MCF 10A (cell line): ENCODE measurements at regions of chr3 and their contacts with region 1.

Region 1: DNA sequence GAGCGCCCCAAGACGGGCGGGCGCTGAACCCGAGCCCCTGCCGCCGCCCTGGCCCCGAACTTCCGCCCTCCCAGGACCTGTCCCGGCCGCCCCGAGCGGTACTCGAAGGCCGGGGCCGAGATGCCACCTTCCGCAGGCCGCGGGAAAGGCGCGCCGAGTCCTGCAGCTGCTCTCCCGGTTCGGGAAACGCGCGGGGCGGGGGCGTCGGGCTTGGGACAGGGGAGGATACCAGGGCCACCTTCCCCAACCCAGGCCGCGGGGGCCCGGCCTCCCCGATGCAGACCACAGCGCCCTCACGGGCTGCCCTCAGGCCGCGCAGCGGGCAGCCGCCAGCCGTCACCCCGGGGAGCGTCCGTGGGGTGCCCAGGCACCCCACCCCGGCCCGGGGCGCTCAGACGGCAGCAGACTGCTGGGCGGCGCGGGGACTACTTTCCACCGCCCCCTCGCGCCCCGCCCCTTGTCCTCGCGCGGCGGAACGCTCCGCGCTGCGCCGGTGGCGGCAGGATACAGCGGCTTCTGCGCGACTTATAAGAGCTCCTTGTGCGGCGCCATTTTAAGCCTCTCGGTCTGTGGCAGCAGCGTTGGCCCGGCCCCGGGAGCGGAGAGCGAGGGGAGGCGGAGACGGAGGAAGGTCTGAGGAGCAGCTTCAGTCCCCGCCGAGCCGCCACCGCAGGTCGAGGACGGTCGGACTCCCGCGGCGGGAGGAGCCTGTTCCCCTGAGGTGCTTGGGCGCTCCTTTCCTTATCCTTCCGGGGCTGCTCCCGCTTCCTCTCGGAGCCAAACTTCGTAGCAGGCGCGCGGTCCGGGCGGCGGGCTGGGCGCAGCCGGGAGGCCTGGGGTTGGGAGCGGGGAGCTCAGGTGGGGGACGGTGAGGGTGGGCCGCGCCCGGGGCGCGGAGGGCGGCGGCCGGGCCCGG is at the start of gene CTNNB1:
- DNase-seq: peak; percentile 89
- H3K4me3 Mint-ChIP-seq: peak within 1 kb of the TSS; percentile 82
- H3K27ac Mint-ChIP-seq: peak within 1 kb of the TSS; percentile 74
- H3K4me1 Mint-ChIP-seq: peaks cover 22% of the 10 kb centered on the region
- H3K27me3 Mint-ChIP-seq: no peaks in the 10 kb centered on the region
- CTCF ChIP-seq: no peak
- total RNA-seq, gene CTNNB1: 222 and 244 TPM in 2 replicates

Region 2: DNA sequence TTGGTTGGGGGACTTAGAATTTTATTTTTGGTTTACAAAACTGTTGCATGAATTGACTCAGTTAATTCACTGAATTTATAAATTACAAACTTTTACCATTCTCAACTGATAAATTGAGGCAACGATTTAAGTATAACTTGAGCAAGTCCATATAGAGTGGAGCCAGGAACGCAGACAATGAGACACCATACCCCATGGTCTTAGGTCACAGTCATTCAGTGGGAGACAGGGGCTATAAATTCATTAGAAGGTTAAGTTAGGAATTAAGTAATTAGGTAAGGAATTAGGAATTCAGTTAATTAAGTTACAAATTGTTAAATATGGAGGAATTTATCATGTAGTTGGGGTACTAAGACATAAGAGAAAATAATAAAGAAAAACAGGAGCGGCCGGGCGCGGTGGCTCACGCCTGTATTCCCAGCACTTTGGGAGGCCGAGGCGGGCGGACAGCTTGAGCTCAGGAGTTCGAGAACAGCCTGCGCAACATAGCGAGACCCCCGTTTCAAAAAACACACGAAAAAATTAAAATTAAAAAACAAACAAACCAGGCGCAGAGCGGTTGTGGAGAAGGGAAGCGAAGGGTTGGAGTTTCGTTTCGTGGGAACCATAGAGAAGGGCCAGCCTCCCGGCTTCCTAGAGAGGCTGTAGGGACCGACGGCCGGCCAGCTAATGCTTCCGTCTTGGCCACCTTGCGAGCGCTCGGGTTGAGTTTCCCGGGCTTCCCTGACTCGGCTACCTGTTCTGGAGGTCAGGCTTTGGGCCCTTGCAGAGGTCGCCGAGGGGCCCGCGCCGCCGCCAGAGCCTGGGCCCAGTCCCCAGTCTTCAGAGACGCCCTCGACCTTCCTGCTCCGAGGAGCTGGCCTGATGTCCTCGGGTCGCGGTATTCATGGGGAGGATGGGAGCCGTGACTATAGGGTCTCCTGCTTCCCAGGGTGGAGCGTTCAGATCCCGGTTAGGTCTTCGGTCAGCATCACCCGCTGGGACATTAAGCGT is 722.4 kb before region 1 on chr3 and contains the start of gene ZNF619:
- CTCF ChIA-PET with region 1: no interaction called
- POLR2A ChIA-PET with region 1: interaction called, 3 read pairs
- intact Hi-C with region 1: loop called (anchors 10 kb)
- DNase-seq: peak; percentile 80
- H3K4me3 Mint-ChIP-seq: peak within 1 kb of the TSS; percentile 90
- H3K27ac Mint-ChIP-seq: peak within 1 kb of the TSS; percentile 99
- H3K4me1 Mint-ChIP-seq: peaks cover 11% of the 10 kb centered on the region
- H3K27me3 Mint-ChIP-seq: no peaks in the 10 kb centered on the region
- CTCF ChIP-seq: no peak
- total RNA-seq, gene ZNF619: 8.3 and 8.7 TPM in 2 replicates

Region 3: GRCh38 chr3:40719660-40720287 is 479.4 kb before region 1 on chr3:
- CTCF ChIA-PET with region 1: interaction called, 25 read pairs
- POLR2A ChIA-PET with region 1: interaction called, 7 read pairs
- intact Hi-C with region 1: loop called (anchors 2 kb)
- DNase-seq: peak; percentile 83
- H3K4me3 Mint-ChIP-seq: no peak overlapping the region
- H3K27ac Mint-ChIP-seq: no peak overlapping the region
- H3K4me1 Mint-ChIP-seq: peaks cover 17% of the 10 kb centered on the region
- H3K27me3 Mint-ChIP-seq: no peaks in the 10 kb centered on the region
- CTCF ChIP-seq: peak; percentile 51

Region 4: GRCh38 chr3:40877631-40878463 is 321.4 kb before region 1 on chr3:
- CTCF ChIA-PET with region 1: no interaction called
- POLR2A ChIA-PET with region 1: no interaction called
- intact Hi-C with region 1: no loop called
- DNase-seq: peak; percentile 94
- H3K4me3 Mint-ChIP-seq: no peak overlapping the region
- H3K27ac Mint-ChIP-seq: peak overlapping the region; percentile 4
- H3K4me1 Mint-ChIP-seq: peaks cover 34% of the 10 kb centered on the region
- H3K27me3 Mint-ChIP-seq: no peaks in the 10 kb centered on the region
- CTCF ChIP-seq: no peak

Region 5: GRCh38 chr3:40971191-40972168 is 227.7 kb before region 1 on chr3:
- CTCF ChIA-PET with region 1: no interaction called
- POLR2A ChIA-PET with region 1: interaction called, 7 read pairs
- intact Hi-C with region 1: loop called (anchors 1 kb)
- DNase-seq: peak; percentile 98
- H3K4me3 Mint-ChIP-seq: peak overlapping the region; percentile 5
- H3K27ac Mint-ChIP-seq: peak overlapping the region; percentile 98
- H3K4me1 Mint-ChIP-seq: peaks cover 20% of the 10 kb centered on the region
- H3K27me3 Mint-ChIP-seq: no peaks in the 10 kb centered on the region
- CTCF ChIP-seq: peak; percentile 11

Region 6: DNA sequence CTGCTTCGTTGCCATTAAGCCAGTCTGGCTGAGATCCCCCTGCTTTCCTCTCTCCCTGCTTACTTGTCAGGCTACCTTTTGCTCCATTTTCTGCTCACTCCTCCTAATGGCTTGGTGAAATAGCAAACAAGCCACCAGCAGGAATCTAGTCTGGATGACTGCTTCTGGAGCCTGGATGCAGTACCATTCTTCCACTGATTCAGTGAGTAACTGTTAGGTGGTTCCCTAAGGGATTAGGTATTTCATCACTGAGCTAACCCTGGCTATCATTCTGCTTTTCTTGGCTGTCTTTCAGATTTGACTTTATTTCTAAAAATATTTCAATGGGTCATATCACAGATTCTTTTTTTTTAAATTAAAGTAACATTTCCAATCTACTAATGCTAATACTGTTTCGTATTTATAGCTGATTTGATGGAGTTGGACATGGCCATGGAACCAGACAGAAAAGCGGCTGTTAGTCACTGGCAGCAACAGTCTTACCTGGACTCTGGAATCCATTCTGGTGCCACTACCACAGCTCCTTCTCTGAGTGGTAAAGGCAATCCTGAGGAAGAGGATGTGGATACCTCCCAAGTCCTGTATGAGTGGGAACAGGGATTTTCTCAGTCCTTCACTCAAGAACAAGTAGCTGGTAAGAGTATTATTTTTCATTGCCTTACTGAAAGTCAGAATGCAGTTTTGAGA is 25.1 kb after region 1 on chr3:
- CTCF ChIA-PET with region 1: interaction called, 3 read pairs
- POLR2A ChIA-PET with region 1: interaction called, 13 read pairs
- intact Hi-C with region 1: no loop called
- DNase-seq: peak; percentile 89
- H3K4me3 Mint-ChIP-seq: no peak overlapping the region
- H3K27ac Mint-ChIP-seq: no peak overlapping the region
- H3K4me1 Mint-ChIP-seq: peaks cover 37% of the 10 kb centered on the region
- H3K27me3 Mint-ChIP-seq: no peaks in the 10 kb centered on the region
- CTCF ChIP-seq: no peak

Region 7: DNA sequence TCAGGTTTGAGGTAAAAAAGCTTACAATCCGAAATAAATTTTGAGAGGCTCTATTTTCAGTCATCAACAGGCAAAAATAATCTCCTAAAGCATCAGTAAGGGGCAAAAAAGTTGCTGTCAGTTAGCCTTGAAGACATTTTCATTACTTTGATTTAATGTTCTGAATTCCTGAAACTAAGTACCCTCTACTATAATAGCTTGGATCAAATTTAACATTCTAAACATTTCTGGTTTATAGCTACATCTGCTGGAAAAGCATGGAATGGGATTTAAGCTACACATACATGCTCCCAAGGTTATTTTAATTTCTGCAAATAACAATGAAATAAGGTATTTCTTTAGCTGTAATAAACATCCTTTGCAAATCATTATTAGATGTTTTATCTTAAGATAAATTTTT is 517.3 kb after region 1 on chr3:
- CTCF ChIA-PET with region 1: interaction called, 3 read pairs
- POLR2A ChIA-PET with region 1: no interaction called
- intact Hi-C with region 1: loop called (anchors 5 kb)
- DNase-seq: peak; percentile 9
- H3K4me3 Mint-ChIP-seq: no peak overlapping the region
- H3K27ac Mint-ChIP-seq: no peak overlapping the region
- H3K4me1 Mint-ChIP-seq: no peaks in the 10 kb centered on the region
- H3K27me3 Mint-ChIP-seq: no peaks in the 10 kb centered on the region
- CTCF ChIP-seq: no peak